Activated naive CD4-positive, alpha-beta T cell treated with anti-CD3 and anti-CD28 coated beads for 36 hours (primary cell): ENCODE measurements at regions of chr9 and their contacts with region 1.

Region 1: DNA sequence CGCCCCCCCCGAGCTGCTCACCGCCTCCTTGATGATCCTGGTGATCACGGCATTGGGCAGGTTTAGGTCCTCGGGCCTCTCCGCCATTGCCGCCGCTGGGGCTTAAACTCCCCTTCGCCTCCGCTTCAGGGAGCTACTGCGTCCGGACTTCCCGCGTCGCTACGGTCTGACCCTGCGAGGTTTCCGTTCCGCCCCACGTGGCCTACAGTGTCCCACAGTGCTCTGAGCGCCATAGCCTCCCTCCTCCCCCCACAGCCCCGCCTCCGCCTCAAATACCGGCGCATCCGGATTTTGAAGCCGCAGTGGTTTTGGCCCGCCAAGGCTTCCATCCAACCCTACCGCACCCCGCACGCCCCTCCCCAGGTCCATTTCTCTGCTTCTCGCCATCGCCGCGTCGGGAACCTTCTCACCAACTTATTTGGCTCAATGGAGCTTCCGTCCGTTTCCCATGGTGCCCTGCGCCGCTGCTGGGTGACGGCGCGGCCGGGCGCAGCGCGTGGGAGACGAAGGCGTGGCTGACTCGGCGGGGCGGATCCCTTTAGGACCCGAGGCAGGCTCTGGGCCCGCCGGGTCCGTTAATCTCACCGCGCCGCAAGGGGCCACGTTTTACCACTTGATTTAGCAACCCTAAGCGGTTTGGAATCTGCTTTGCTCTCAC is at the starts of genes C9orf43 and POLE3:
- DNase-seq: peak; percentile 97
- H3K4me3 Mint-ChIP-seq: peak within 1 kb of the TSS; percentile 99
- H3K27ac Mint-ChIP-seq: peak within 1 kb of the TSS; percentile 100
- H3K4me1 Mint-ChIP-seq: peaks cover 38% of the 10 kb centered on the region
- H3K27me3 Mint-ChIP-seq: no peaks in the 10 kb centered on the region
- total RNA-seq, gene C9orf43: 0.83 to 0.84 TPM
- total RNA-seq, gene POLE3: 34.1 to 37.4 TPM

Region 2: DNA sequence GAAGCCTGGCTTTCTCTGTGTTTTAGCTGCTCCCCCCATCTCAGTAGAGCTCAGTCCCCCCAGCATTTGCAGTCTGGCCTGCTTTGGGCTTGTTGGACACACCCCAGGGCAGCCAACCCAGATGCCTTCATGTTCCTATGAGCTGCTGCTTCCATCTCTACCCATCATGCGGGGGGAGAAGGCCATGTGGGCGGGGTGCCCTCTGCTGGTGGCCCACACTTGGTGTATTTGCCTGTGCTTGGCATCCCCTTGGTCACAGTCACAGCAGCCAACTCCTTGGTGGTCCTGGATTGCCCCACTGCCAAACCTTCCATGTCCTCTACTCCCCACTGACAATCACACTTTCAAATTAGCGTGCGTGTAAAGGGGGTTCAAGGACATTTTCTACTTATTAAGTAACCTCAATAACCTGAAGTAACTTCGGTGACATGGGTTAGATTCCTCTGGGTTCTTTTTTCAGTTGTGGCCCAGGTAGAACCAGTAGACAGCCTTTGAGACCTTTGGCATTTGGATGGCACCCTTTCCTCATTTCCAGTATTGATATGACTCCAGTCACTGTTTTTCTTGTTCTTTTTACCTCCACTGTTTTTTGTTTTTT is 617.0 kb before region 1 on chr9:
- CTCF ChIA-PET with region 1: no interaction called
- intact Hi-C with region 1: no loop called
- DNase-seq: peak; percentile 93
- H3K4me3 Mint-ChIP-seq: no peak overlapping the region
- H3K27ac Mint-ChIP-seq: no peak overlapping the region
- H3K4me1 Mint-ChIP-seq: peaks cover 7% of the 10 kb centered on the region
- H3K27me3 Mint-ChIP-seq: no peaks in the 10 kb centered on the region

Region 3: GRCh38 chr9:113155911-113156588 is 254.3 kb before region 1 on chr9:
- CTCF ChIA-PET with region 1: no interaction called
- intact Hi-C with region 1: loop called (anchors 2 kb)
- DNase-seq: peak; percentile 62
- H3K4me3 Mint-ChIP-seq: no peak overlapping the region
- H3K27ac Mint-ChIP-seq: peak overlapping the region; percentile 25
- H3K4me1 Mint-ChIP-seq: peaks cover 30% of the 10 kb centered on the region
- H3K27me3 Mint-ChIP-seq: no peaks in the 10 kb centered on the region

Region 4: GRCh38 chr9:113340017-113340699 is 70.2 kb before region 1 on chr9 and contains the start of gene WDR31:
- CTCF ChIA-PET with region 1: interaction called, 4 read pairs
- intact Hi-C with region 1: loop called (anchors 1 kb)
- DNase-seq: peak; percentile 85
- H3K4me3 Mint-ChIP-seq: peak within 1 kb of the TSS; percentile 84
- H3K27ac Mint-ChIP-seq: peak within 1 kb of the TSS; percentile 55
- H3K4me1 Mint-ChIP-seq: peaks cover 35% of the 10 kb centered on the region
- H3K27me3 Mint-ChIP-seq: peaks cover 4% of the 10 kb centered on the region
- total RNA-seq, gene WDR31: 0.81 to 0.88 TPM

Region 5: GRCh38 chr9:113376634-113377567 is 33.4 kb before region 1 on chr9 and contains the start of gene HDHD3:
- CTCF ChIA-PET with region 1: no interaction called
- intact Hi-C with region 1: loop called (anchors 1 kb)
- DNase-seq: peak; percentile 82
- H3K4me3 Mint-ChIP-seq: peak within 1 kb of the TSS; percentile 81
- H3K27ac Mint-ChIP-seq: peak within 1 kb of the TSS; percentile 77
- H3K4me1 Mint-ChIP-seq: peaks cover 17% of the 10 kb centered on the region
- H3K27me3 Mint-ChIP-seq: no peaks in the 10 kb centered on the region
- total RNA-seq, gene HDHD3: 8.9 to 9.5 TPM

Region 6: DNA sequence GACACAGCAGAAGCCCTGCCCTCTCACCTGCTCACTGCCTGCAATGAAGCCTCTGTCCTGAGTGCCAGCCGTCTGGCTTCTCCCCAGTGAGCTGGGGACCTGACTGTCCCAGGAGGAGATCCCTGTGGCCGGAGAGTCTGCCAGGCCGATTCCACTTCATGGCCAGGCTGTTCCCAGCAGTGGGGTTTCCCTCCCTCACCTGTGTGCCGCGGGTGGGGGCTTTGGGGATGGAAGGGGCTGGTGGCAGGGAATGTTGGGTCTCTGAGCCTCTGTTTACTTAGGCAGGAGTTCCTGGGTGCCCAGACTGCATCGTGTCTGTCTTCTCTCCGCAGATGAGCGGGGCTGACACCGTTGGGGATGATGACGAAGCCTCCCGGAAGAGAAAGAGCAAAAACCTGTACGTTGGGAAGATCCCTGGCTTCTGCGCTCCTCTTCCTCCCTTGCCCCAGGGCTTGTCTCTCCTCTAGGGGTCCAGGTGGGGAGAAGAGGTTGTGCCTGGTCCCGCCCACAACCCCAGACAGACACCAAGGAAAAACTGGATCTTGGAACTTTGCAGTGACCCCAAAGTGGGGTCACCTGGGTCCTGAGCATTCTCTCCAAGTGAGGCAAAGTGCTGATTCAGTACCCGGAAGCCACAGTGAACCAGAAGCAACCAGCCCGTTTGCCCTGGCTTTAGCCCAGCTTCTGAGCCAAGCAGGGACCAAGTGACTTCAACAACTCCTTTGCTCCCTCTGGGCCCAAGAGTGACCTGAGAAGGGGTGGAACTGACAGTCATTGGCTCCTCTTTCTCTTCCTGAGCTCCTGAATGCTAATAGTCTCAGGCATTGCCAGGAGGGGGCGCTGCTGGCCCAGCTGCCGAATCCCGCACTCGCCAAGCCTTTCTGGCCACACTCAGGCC is 180.9 kb after region 1 on chr9:
- CTCF ChIA-PET with region 1: interaction called, 3 read pairs
- intact Hi-C with region 1: loop called (anchors 2 kb)
- DNase-seq: peak; percentile 85
- H3K4me3 Mint-ChIP-seq: no peak overlapping the region
- H3K27ac Mint-ChIP-seq: no peak overlapping the region
- H3K4me1 Mint-ChIP-seq: peaks cover 37% of the 10 kb centered on the region
- H3K27me3 Mint-ChIP-seq: no peaks in the 10 kb centered on the region